ENCODE measurements at regions of chr3 and their contacts with region 1.

Region 1: GRCh38 chr3:12875857-12876836 is 34.8 kb upstream of the RPL32 start:
- DNase-seq: peak; percentile 29 to 87
- H3K4me3 ChIP-seq: peak overlapping the region; percentile 27 to 58 (median 30)
- H3K27ac ChIP-seq: no peak overlapping the region
- H3K4me1 ChIP-seq: peaks cover 0 to 3% (median 0%) of the 10 kb centered on the region in 4 experiments; a peak in 2 of 7 replicates
- H3K27me3 ChIP-seq: peaks cover 0 to 15% (median 8%) of the 10 kb centered on the region in 4 experiments; a peak in 3 of 7 replicates
- CTCF ChIP-seq: peak in 2 of 3 experiments; percentile 48 to 64; a peak in 2 of 4 replicates
- EP300 ChIP-seq: no peak
- POLR2A ChIP-seq: no peak
- RAD21 ChIP-seq: peak; percentile 15 to 22; a peak in 2 of 4 replicates

Region 2: GRCh38 chr3:12768579-12769527 is 107.3 kb before region 1 on chr3:
- CTCF ChIA-PET with region 1: no interaction called
- POLR2A ChIA-PET with region 1: no interaction called
- DNase-seq: peak in 1 of 2 experiments; percentile 68
- H3K4me3 ChIP-seq: peak overlapping the region in 2 of 4 experiments; percentile 0 to 44; a peak in 4 of 8 replicates
- H3K27ac ChIP-seq: no peak overlapping the region
- H3K4me1 ChIP-seq: no peaks in the 10 kb centered on the region
- H3K27me3 ChIP-seq: peaks cover 0 to 3% (median 0%) of the 10 kb centered on the region in 4 experiments; a peak in 3 of 7 replicates
- CTCF ChIP-seq: peak in 1 of 3 experiments; percentile 6; a peak in 1 of 4 replicates
- EP300 ChIP-seq: no peak
- POLR2A ChIP-seq: no peak
- RAD21 ChIP-seq: no peak

Region 3: GRCh38 chr3:12817343-12817710 is 58.8 kb before region 1 on chr3:
- CTCF ChIA-PET with region 1: no interaction called
- POLR2A ChIA-PET with region 1: no interaction called
- DNase-seq: no peak
- H3K4me3 ChIP-seq: no peak overlapping the region
- H3K27ac ChIP-seq: no peak overlapping the region
- H3K4me1 ChIP-seq: no peaks in the 10 kb centered on the region; a peak in 1 of 7 replicates
- H3K27me3 ChIP-seq: no peaks in the 10 kb centered on the region
- CTCF ChIP-seq: no peak
- EP300 ChIP-seq: no peak
- POLR2A ChIP-seq: no peak
- RAD21 ChIP-seq: no peak

Region 4: DNA sequence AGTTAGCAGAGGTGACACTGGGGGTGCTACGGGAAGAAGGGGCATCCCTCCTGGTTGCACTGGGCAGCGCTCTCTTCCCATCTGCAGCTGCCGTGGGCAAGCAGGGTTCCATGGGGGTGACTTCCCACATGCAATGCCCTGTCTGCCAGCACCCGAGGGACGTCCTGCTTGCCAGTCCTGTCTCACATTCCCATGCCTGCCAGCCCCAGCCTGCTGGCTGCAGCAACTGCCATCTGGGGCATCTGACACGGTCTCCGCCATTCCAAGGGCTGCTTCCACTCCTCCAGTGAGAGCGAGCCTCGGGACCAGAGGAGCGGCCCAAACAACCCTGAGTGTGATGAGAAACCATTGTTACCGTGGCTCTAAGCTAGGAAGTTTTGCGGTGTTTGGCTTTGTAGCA is 10.6 kb after region 1 on chr3:
- CTCF ChIA-PET with region 1: interaction called, 353 read pairs
- POLR2A ChIA-PET with region 1: interaction called, 11 read pairs
- DNase-seq: no peak
- H3K4me3 ChIP-seq: no peak overlapping the region
- H3K27ac ChIP-seq: no peak overlapping the region
- H3K4me1 ChIP-seq: peaks cover 0 to 3% (median 2%) of the 10 kb centered on the region in 4 experiments; a peak in 2 of 7 replicates
- H3K27me3 ChIP-seq: peaks cover 0 to 8% (median 1%) of the 10 kb centered on the region in 4 experiments; a peak in 4 of 7 replicates
- CTCF ChIP-seq: no peak
- EP300 ChIP-seq: no peak
- POLR2A ChIP-seq: no peak
- RAD21 ChIP-seq: no peak

Region 5: DNA sequence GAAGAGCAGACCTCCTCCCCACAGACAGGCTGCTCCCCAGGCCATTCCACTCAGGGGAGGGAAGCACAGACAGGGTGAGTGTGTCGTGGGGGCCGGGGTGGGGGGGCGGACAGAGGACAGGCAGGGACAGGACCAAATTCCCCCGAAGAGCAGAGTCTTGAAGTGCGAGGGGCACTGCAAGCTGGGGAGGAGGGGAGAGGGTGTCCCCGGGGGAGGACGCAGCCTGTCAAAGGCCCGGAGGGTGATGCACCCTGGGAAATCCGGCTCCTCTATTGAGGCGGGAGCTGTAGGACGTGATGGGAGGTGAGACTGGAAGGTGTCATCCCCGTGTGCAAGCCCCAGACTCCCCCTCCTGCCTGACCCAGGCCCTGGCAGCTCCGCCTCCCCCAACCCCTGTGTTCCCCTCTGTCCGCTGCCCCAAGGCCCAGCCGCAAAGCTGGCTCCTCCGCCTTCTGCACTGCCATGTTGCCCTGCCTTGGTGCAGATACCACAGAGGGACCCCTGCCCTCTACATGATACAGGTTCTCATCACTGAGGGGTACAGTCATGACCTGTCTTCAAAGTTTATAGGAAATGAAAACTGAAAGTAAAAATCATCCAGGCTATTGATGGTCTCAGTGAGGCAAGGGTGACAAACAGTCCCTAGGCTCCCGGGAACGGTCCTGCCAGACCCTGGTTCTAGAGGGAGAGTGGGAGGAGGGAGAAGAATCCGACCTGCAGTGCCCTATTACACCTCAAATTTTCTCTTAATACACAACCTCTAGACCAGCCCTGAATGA is 273.4 kb after region 1 on chr3:
- CTCF ChIA-PET with region 1: no interaction called
- POLR2A ChIA-PET with region 1: no interaction called
- DNase-seq: no peak
- H3K4me3 ChIP-seq: no peak overlapping the region
- H3K27ac ChIP-seq: no peak overlapping the region
- H3K4me1 ChIP-seq: peaks cover 0 to 11% (median 3%) of the 10 kb centered on the region in 4 experiments; a peak in 2 of 7 replicates
- H3K27me3 ChIP-seq: no peaks in the 10 kb centered on the region
- CTCF ChIP-seq: no peak
- EP300 ChIP-seq: no peak
- POLR2A ChIP-seq: no peak
- RAD21 ChIP-seq: no peak

Measured in H1 (cell line).